PC-3 (cell line): ENCODE measurements at regions of chr3 and their contacts with region 1.

Region 1: DNA sequence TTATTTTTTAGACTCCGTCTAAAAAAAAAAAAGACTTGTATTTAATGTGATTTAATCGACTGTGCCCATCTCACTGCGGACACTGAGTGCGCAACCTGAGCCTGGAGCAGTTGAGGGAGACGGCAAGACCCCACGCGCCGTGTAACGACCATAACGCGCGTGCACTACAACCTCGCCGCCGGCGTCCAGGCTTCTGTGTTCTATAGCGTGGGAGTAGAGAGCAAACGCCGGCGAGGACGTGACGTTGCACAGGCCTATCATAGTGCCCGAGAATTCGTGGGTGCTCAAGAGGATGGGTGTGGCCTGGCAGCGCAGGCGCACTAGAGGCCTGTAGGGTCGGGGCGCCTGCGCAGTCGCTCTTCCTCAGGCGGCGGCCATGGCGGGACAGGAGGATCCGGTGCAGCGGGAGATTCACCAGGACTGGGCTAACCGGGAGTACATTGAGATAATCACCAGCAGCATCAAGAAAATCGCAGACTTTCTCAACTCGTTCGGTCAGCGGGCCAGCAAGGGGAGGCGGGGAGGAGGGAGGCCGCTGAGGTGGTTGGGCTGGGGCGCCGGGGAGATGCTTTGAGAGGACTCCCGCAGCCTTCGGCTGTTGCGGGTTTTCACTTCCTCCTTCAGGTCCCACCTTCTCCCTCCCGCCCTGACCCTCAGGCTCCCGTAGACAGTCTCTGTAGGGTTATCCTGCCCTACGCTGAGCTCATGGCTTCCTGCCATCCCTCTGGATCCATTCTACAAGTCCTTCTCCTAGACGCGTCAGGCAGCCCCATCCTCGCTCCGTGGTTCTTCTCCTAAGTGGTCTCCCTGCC is at the start of gene BRK1:
- DNase-seq: peak; percentile 98
- ATAC-seq: peak; percentile 97
- H3K4me3 ChIP-seq: peak within 1 kb of the TSS; percentile 94
- H3K27ac ChIP-seq: peak within 1 kb of the TSS; percentile 34
- H3K4me1 ChIP-seq: peaks cover 19% of the 10 kb centered on the region
- H3K27me3 ChIP-seq: no peaks in the 10 kb centered on the region
- CTCF ChIP-seq: no peak
- total RNA-seq, gene BRK1: 110 and 140 TPM in 2 replicates

Region 2: DNA sequence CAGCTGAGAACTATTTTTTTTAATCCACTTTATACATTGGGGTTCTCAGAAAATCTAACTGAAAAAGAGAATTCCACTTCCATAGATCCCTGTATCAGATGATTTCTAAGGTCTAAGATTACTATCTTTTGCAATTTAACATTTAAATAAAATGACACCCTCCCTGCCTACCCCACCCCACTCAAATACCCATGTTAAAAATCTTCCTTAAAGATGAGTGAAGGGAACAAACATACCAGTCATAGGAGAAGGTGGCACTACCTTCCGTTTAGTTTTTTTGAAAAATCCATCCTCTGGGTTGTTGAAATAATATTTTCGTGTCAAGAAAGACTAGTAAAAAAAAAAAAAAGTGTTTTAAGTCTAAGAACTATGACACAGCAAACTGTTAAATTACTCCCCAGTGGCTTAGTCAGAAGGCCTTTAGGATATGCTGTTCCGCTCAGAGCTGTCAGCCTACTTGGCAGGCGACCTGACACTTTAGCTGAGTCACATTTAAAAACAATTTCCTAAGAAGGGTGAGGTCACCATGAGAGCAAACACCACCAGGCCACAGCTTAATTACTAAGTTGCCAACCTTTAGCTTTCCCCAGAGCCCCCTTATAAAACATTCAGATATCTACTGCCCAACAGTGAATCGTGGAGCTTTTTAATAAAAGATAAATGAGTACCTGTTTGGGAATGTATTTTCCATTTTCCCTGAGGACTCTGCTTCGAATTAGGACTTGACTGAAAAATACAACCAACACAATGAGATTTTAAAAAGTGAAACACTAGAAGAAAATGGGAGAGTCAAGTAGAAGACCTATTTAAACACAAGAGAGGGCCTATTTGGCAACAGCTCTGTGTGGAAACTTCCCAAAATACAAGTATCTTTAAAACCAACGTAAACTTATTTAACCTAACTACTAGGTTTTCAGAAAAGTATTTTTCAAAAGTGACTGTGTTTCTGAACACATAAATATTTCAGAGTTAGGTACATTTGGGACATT is 138.5 kb before region 1 on chr3:
- CTCF ChIA-PET with region 1: no interaction called
- POLR2A ChIA-PET with region 1: no interaction called
- intact Hi-C with region 1: loop called (anchors 10 kb)
- DNase-seq: peak; percentile 98
- ATAC-seq: peak; percentile 96
- H3K4me3 ChIP-seq: peak overlapping the region; percentile 36
- H3K27ac ChIP-seq: peak overlapping the region; percentile 93
- H3K4me1 ChIP-seq: peaks cover 20% of the 10 kb centered on the region
- H3K27me3 ChIP-seq: no peaks in the 10 kb centered on the region
- CTCF ChIP-seq: no peak

Region 3: GRCh38 chr3:10198761-10199649 is 83.5 kb after region 1 on chr3:
- CTCF ChIA-PET with region 1: no interaction called
- POLR2A ChIA-PET with region 1: interaction called, 18 read pairs
- intact Hi-C with region 1: no loop called
- DNase-seq: peak; percentile 88
- ATAC-seq: peak; percentile 83
- H3K4me3 ChIP-seq: no peak overlapping the region
- H3K27ac ChIP-seq: peak overlapping the region; percentile 95
- H3K4me1 ChIP-seq: peaks cover 57% of the 10 kb centered on the region
- H3K27me3 ChIP-seq: no peaks in the 10 kb centered on the region
- CTCF ChIP-seq: no peak

Region 4: GRCh38 chr3:10248184-10249080 is 132.9 kb after region 1 on chr3 and contains the start of gene TATDN2:
- CTCF ChIA-PET with region 1: no interaction called
- POLR2A ChIA-PET with region 1: no interaction called
- intact Hi-C with region 1: loop called (anchors 1 kb)
- DNase-seq: peak; percentile 98
- ATAC-seq: peak; percentile 96
- H3K4me3 ChIP-seq: peak within 1 kb of the TSS; percentile 97
- H3K27ac ChIP-seq: peak within 1 kb of the TSS; percentile 15
- H3K4me1 ChIP-seq: peaks cover 17% of the 10 kb centered on the region
- H3K27me3 ChIP-seq: no peaks in the 10 kb centered on the region
- CTCF ChIP-seq: no peak
- total RNA-seq, gene TATDN2: 14.1 and 25.6 TPM in 2 replicates